ENCODE measurements at regions of chr1 and their contacts with region 1.

Region 1: DNA sequence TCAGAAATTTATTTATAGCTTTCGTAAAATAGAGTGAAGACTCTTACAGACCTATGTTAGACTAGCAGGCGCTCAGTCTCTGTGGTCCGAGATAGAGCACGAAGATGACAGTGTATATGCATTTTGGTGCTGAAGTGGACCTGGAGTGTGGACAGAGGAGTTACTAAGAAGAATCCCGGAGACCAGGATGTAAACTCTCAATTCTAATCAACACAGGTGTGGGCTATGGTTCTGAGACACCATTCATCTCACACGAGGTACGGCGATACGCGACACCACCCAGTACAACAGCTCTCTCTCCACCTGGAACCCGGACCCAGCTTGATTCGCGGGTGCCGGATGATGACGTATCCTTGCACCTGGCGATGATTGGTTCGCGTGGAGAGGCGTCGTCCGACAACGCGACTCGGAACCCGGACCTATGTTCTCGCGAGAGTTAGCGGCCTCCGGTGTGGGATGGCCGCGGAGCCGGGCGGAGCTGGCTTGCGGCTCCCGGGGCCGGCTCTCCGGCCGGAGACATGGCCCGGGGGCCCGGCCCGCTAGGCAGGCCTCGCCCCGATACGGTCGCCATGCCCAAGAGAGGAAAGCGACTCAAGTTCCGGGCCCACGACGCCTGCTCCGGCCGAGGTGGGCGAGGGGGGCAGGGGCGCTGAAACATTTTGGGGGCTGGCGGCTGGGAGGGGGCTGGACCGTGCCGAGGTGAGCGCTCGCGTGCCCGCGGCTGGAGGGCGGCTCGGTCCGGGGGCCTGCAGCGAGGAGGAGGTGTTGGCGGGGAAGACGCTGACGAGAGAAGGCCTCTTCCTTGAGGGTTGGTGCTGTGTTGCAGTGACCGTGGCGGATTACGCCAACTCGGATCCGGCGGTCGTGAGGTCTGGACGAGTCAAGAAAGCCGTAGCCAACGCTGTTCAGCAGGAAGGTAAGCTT is at the start of gene TMEM183A:
- DNase-seq: peak; percentile 92
- ATAC-seq: peak; percentile 91
- H3K4me3 ChIP-seq: peak within 1 kb of the TSS; percentile 99
- H3K27ac ChIP-seq: peak within 1 kb of the TSS; percentile 96
- H3K4me1 ChIP-seq: peaks cover 5% of the 10 kb centered on the region
- H3K27me3 ChIP-seq: no peaks in the 10 kb centered on the region
- CTCF ChIP-seq: no peak
- EP300 ChIP-seq: no peak
- POLR2A ChIP-seq: peak; percentile 95
- RAD21 ChIP-seq: no peak
- polyA plus RNA-seq, gene TMEM183A: 12.3 to 25.0 TPM

Region 2: DNA sequence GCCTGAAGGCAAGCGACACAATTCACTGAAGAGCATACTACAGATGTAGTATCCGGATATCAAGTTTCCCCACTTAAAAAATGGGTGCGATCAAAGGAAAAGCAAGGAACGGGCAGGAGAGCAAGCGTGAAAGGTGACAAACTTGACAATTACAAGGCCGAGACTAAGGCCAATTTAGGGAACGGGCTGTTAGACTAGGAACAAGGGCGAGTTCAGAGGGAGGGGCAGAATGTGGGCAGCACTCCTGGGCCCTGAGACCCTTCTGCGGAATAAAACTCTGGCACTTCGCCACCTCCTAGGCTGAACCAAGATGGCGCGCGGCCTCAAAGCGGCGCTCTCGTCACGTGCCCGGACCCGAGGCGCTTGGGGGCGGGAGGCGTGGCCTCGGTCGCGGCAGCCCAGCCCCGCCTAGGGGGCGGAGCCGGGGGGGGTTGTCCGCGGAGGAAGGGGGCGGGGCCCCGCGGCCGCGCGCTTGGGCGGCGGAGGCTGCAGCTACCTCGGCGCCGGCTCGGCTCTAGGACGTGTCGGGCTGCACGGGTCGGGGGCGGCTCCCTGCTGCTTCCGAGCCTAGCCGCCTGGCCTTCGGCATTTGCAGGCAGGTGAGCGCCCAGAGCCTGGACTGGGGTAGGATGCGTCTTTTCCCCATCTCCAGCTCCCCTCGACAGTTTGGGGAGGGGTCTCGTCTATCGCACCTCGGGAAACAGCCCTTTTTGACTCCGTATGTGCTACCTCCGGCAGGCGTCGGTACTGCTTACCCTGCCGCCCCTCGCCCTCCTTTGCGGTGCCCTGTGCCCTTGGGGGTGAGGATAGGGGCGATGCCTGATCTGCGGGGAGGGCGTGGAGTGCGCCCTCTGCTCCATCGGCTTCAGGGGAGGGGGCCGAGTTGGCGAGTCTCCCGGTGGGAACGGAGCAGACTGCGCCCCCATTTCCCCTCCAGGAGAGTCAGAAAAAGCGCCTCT is 19.1 kb after region 1 on chr1 and contains the start of gene PPFIA4:
- CTCF ChIA-PET with region 1: interaction called, 6 read pairs
- POLR2A ChIA-PET with region 1: interaction called, 21 read pairs
- RAD21 ChIA-PET with region 1: interaction called, 7 read pairs
- SMC1A ChIA-PET with region 1: no interaction called
- in situ Hi-C with region 1: no loop called
- intact Hi-C with region 1: no loop called
- DNase-seq: peak; percentile 42
- ATAC-seq: peak; percentile 96
- H3K4me3 ChIP-seq: peak within 1 kb of the TSS; percentile 93
- H3K27ac ChIP-seq: no peak within 1 kb of the TSS
- H3K4me1 ChIP-seq: no peaks in the 10 kb centered on the region; the same call in none of the 2 replicates
- H3K27me3 ChIP-seq: no peaks in the 10 kb centered on the region; a peak in 2 of 4 replicates
- CTCF ChIP-seq: peak in 1 of 3 experiments; percentile 24; a peak in 1 of 6 replicates
- EP300 ChIP-seq: no peak
- POLR2A ChIP-seq: peak; percentile 64
- RAD21 ChIP-seq: no peak
- polyA plus RNA-seq, gene PPFIA4: 0.02 to 0.11 TPM